Transverse colon (tissue), 4 donors: ENCODE measurements at regions of chr1 and their contacts with region 1.

Region 1: DNA sequence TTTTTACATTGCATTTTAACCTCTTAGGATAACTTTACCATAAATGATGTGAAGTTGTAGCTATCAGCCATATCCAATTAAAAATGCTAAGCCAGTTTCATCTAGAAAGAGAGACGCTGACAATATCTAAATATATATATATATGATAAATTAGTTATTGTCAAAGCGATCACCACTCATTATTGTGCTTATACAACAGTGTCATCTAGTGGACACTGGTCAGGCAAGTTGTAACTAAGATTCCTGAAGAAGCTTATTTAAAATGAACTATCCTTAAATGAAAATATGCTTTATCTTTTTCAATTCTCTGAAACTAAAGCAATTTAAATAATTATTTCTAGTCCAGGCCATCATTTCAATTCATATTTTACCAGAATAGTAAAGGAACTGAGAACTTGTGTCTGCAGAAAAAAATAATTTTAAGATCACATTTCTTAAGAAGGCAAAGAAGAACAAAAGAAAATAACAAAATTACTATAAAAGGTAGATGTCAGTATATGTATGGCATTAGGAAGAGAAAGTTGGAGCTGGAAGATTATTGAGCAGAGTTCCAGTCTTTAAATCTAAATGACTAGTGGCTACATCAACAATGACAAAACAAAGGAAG is 193.3 kb upstream of the SNX7 start:
- DNase-seq: no peak
- H3K4me3 ChIP-seq: no peak overlapping the region
- H3K27ac ChIP-seq: no peak overlapping the region
- H3K4me1 ChIP-seq: no peaks in the 10 kb centered on the region
- H3K27me3 ChIP-seq: no peaks in the 10 kb centered on the region
- CTCF ChIP-seq: peak; percentile 59 to 82 (median 71)
- EP300 ChIP-seq: no peak
- POLR2A ChIP-seq: no peak

Region 2: GRCh38 chr1:96966536-96967138 is 1501.6 kb before region 1 on chr1:
- in situ Hi-C with region 1: loop called in 1 of 4 experiments (anchors 25 kb)
- intact Hi-C with region 1: no loop called
- DNase-seq: peak; percentile 78
- H3K4me3 ChIP-seq: no peak overlapping the region
- H3K27ac ChIP-seq: no peak overlapping the region
- H3K4me1 ChIP-seq: peaks cover 0 to 18% (median 2%) of the 10 kb centered on the region in 4 donors
- H3K27me3 ChIP-seq: no peaks in the 10 kb centered on the region
- CTCF ChIP-seq: peak; percentile 84 to 93 (median 93)
- EP300 ChIP-seq: no peak
- POLR2A ChIP-seq: no peak

Region 3: GRCh38 chr1:98053471-98054366 is 414.5 kb before region 1 on chr1:
- in situ Hi-C with region 1: loop called in 1 of 4 experiments (anchors 10 kb)
- intact Hi-C with region 1: no loop called
- DNase-seq: peak; percentile 32
- H3K4me3 ChIP-seq: peak overlapping the region; percentile 29 to 58 (median 34)
- H3K27ac ChIP-seq: no peak overlapping the region
- H3K4me1 ChIP-seq: peaks cover 5 to 12% (median 9%) of the 10 kb centered on the region in 4 donors
- H3K27me3 ChIP-seq: peaks cover 77% of the 10 kb centered on the region
- CTCF ChIP-seq: peak; percentile 31 to 90 (median 85)
- EP300 ChIP-seq: no peak
- POLR2A ChIP-seq: no peak

Region 4: DNA sequence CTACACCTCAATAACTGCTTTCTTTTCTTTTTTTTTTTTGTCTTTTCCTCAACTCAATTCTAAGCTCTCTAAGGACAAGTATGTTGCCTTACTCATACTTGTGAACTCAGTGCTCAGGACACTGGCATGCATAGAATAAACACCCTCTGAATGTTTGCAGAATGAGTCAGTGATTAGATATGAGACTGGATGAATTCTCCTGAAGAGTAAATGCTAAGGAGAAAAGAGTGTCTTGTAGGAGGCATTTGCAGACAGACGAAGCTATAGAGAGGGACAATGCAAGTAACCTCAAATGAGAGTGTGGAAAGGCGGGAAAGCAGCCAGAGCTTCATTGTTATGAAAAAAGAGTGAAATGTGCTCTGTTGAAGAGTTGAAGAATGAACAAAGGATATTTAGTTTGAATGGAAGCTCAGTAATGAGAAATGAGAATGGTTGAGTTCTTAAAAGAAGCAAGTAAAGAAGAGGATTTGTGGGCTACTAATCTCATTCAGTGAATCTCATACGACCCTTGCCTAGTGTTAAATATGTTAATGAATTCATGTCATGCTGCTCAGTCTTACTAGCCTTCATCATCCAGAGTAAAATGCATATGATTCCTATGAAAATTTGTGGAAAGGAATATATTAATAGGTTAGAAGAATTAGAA is 381.3 kb before region 1 on chr1:
- in situ Hi-C with region 1: loop called in 1 of 4 experiments (anchors 25 kb)
- intact Hi-C with region 1: no loop called
- DNase-seq: no peak
- H3K4me3 ChIP-seq: no peak overlapping the region
- H3K27ac ChIP-seq: no peak overlapping the region
- H3K4me1 ChIP-seq: no peaks in the 10 kb centered on the region
- H3K27me3 ChIP-seq: no peaks in the 10 kb centered on the region
- CTCF ChIP-seq: no peak
- EP300 ChIP-seq: no peak
- POLR2A ChIP-seq: no peak

Region 5: DNA sequence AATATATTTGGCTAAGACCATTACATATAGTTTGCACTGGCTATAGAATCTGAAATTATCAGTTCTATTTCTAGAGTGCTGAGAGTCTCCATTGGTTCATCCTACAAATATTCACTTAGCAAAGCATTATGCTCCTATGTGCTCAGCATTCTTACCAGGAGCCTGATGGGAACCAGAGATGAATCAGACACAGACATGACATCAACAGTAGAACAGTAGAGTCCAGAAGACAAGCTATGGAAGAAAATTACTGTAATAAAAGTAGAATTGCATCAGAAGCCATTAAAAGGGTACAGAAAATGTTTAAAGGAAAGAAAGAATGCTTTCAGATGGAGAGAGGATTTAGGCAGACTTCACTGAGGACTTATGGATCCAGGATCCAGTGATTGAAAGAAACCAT is 78.4 kb before region 1 on chr1:
- in situ Hi-C with region 1: no loop called
- intact Hi-C with region 1: no loop called
- DNase-seq: no peak
- H3K4me3 ChIP-seq: no peak overlapping the region
- H3K27ac ChIP-seq: no peak overlapping the region
- H3K4me1 ChIP-seq: peaks cover 0 to 30% (median 11%) of the 10 kb centered on the region in 4 donors
- H3K27me3 ChIP-seq: no peaks in the 10 kb centered on the region
- CTCF ChIP-seq: no peak
- EP300 ChIP-seq: no peak
- POLR2A ChIP-seq: no peak